ENCODE measurements at regions of chr14 and their contacts with region 1.

Region 1: GRCh38 chr14:68248481-68249255 is 429.1 kb downstream of the RAD51B start:
- DNase-seq: peak; percentile 47
- ATAC-seq: peak; percentile 68

Region 2: GRCh38 chr14:67943947-67944346 is 304.7 kb before region 1 on chr14:
- intact Hi-C with region 1: loop called (anchors 5 kb)
- DNase-seq: no peak
- ATAC-seq: peak; percentile 52

Region 3: DNA sequence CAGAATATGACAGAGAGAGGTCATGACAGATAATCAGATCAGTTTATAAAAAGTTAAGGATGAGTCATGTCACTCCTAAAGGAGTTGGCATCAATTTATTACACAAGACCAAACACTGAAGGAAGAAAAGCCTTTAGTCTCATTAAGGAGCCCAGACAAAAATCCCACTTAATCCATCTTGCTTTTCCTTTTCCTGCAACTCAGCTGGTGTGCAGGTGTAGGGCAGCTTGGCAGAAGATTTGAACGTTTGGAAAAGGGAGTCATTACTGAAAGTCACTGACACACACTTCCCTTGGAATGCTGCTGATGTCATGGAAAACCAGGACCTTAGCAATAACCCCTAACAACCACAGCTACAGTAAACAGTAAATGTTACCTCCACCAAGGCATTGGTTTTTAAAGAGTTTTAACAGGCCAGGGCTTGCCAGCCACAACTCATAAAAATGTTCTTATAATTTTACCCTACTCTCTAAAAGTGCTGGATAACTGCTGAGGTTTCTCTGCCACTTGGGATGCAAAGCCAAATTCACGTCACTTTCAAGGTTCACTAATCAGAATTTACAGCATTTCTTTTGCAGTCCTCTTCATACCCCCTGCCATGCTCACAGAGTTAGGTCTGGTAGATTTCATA is 108.4 kb before region 1 on chr14:
- intact Hi-C with region 1: loop called (anchors 10 kb)
- DNase-seq: no peak
- ATAC-seq: peak; percentile 20

Region 4: GRCh38 chr14:68520637-68521556 is 272.2 kb after region 1 on chr14:
- intact Hi-C with region 1: loop called (anchors 10 kb)
- DNase-seq: no peak
- ATAC-seq: peak; percentile 15

Region 5: GRCh38 chr14:68816262-68816942 is 567.7 kb after region 1 on chr14:
- intact Hi-C with region 1: loop called (anchors 2 kb)
- DNase-seq: peak; percentile 95
- ATAC-seq: peak; percentile 95

Measured in left ventricle myocardium superior (tissue), 1 donor.